Activated B cell treated with CpG ODN at 0.5 μM for 24 hours (primary cell): ENCODE measurements at regions of chr7 and their contacts with region 1.

Region 1: DNA sequence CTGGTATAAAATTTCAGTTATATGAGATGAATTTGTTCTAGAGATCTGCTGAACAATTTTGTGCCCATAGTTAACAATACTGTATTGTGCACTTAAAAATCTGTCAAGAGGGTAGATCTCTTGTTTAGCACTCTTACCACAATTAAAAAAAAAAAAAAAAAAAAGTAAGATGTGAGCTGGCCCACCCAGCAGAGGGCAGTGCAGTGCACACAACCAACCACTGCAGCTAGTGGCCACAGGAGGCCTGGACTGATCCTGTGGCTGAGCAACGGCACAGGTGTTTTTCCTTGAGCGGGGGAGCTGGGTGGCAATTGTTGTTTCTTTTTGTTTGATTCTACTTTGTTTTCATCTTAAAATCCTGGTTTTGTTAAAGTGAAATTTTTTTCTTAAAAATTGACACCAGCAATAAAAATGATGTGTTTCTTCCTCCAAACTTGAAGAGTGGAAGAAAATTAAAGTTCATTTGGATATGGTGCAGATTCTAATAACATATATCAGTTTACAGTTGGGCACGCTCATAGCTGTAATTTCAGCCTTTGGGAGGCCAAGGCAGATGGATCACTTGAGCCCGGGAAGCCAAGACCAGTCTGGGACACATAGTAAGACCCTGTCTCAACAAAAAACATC is 171.1 kb upstream of the TBX20 start:
- DNase-seq: peak; percentile 28
- ATAC-seq: peak; percentile 72
- H3K4me3 Mint-ChIP-seq: no peak overlapping the region
- H3K27ac Mint-ChIP-seq: no peak overlapping the region
- H3K4me1 Mint-ChIP-seq: peaks cover 3% of the 10 kb centered on the region
- H3K27me3 Mint-ChIP-seq: peaks cover 16% of the 10 kb centered on the region
- CTCF ChIP-seq: no peak

Region 2: GRCh38 chr7:35519971-35520809 is 95.2 kb after region 1 on chr7:
- CTCF ChIA-PET with region 1: interaction called, 9 read pairs
- POLR2A ChIA-PET with region 1: no interaction called
- intact Hi-C with region 1: loop called (anchors 1 kb)
- DNase-seq: no peak
- ATAC-seq: peak; percentile 50
- H3K4me3 Mint-ChIP-seq: no peak overlapping the region
- H3K27ac Mint-ChIP-seq: no peak overlapping the region
- H3K4me1 Mint-ChIP-seq: peaks cover 3% of the 10 kb centered on the region
- H3K27me3 Mint-ChIP-seq: peaks cover 28% of the 10 kb centered on the region
- CTCF ChIP-seq: no peak

Region 3: DNA sequence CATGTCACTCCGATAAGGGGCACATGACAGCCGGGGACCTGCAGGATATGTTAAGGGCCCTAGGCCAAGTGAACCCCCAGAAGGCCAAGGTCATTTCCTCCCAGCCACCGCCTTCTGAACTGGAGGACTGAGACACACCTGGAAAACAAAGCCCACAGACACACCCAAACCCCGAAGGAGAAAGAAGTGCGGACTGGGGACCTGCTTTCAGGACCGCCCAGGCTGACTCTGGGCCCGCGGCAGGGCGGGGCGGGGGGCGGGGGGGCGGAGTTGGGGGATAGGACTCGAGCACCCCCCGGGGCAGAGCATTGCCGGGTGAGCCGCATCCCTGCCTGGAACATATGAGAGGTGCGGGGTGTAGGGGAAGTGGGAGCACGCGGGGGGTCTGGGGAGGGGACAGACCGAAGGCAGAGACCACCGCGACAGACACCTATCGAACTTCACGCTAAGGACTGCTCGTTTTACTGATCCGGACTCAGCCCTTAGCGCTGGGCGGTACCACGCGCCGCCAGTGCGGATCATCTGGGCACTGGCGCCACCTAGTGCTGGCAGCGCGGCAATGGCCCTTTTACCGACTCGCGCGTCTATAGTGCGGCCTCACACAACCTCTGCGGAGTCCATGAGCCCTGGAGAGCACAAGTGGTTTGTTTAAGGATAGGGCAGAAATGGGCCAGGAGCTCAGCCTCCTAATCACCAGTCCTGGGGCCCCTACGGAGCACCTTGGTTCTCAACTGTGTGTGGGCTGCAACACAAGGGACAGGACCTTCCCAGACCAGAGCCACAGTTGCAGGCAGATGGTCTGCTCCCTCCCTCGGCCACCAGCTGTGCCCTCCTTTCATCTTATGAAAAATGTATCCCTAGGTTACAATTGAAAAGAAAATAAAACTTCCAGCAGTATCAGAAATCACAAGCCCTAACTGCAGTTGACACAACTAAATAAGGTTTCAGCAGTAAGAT is 112.4 kb after region 1 on chr7:
- CTCF ChIA-PET with region 1: interaction called, 4 read pairs
- POLR2A ChIA-PET with region 1: no interaction called
- intact Hi-C with region 1: loop called (anchors 1 kb)
- DNase-seq: peak; percentile 76
- ATAC-seq: peak; percentile 97
- H3K4me3 Mint-ChIP-seq: peak overlapping the region; percentile 84
- H3K27ac Mint-ChIP-seq: no peak overlapping the region
- H3K4me1 Mint-ChIP-seq: peaks cover 4% of the 10 kb centered on the region
- H3K27me3 Mint-ChIP-seq: peaks cover 23% of the 10 kb centered on the region
- CTCF ChIP-seq: peak; percentile 82

Region 4: DNA sequence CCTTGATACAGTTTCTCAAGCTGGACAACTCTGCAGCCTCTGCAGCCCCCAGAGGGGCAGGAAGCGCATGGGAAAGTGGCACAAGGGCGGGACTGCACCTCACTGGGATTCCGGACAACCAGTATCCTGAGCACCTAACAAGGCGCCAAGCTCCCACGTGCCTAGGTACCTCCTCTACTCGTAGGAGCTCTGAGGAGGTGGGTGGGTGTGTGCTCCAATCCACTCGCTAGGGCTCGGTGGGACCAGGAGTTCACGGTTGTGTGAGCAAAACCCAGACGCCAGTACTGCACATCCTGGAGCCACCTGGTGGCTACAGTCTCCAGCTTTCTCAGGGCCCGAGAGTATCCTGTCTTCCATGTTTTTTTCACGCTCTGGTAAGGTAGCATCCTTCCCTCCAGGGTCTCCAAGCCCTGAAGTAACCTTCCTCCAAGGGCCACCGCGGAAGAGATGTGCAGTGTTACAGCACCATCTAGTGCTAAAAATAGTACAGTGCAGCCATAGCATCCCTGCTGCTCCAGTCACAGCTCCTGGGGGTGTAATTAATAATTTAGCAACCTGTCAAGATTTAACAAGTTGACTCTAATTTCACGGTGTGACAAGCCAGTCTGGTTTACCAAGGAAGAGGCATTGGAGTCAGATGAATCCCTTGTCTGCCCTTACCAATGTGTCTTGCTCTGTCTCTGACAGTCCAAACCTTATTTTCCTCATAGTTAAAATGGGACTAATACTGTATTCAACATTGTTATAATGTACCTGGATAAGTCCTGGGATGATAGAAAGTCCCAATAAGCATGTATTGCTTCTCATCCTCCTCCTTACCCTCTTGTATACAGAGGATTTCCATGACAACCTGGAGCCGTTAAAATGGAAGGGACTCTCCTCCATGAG is 199.6 kb after region 1 on chr7:
- CTCF ChIA-PET with region 1: interaction called, 42 read pairs
- POLR2A ChIA-PET with region 1: no interaction called
- intact Hi-C with region 1: loop called (anchors 1 kb)
- DNase-seq: peak; percentile 18
- ATAC-seq: peak; percentile 86
- H3K4me3 Mint-ChIP-seq: no peak overlapping the region
- H3K27ac Mint-ChIP-seq: no peak overlapping the region
- H3K4me1 Mint-ChIP-seq: peaks cover 2% of the 10 kb centered on the region
- H3K27me3 Mint-ChIP-seq: no peaks in the 10 kb centered on the region
- CTCF ChIP-seq: peak; percentile 81

Region 5: DNA sequence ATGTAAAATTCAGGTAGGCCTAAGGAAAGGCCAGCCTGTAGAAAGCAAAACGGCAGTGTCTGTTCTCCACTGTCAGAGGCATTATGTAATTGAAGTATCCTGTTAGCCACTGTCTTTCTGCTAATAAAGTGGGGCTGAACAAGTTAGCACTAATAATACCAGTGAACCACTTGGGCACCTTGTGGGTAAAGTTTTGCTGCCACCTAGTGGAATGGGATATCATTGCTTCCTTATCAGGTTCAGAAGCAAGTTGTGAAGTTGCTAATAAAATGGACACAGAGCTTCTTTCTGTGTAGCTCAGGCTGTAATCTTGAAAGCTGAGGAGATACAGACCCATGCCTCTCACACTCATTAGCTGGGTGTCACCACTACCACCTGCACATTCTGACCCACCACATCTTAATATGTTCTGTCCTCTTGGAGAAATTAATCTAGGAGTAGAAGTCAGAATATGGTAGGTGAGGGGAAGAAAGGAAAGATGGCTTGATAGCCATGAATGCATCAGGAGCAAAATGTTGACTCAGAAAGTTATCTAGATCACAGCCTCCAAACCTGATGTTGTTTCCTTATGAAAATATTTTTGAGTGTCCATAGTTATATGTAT is 551.0 kb after region 1 on chr7:
- CTCF ChIA-PET with region 1: interaction called, 4 read pairs
- POLR2A ChIA-PET with region 1: no interaction called
- intact Hi-C with region 1: loop called (anchors 2 kb)
- DNase-seq: no peak
- ATAC-seq: peak; percentile 82
- H3K4me3 Mint-ChIP-seq: no peak overlapping the region
- H3K27ac Mint-ChIP-seq: no peak overlapping the region
- H3K4me1 Mint-ChIP-seq: peaks cover 4% of the 10 kb centered on the region
- H3K27me3 Mint-ChIP-seq: peaks cover 6% of the 10 kb centered on the region
- CTCF ChIP-seq: peak; percentile 55